Endothelial cell of umbilical vein (primary cell): ENCODE measurements at regions of chr2 and their contacts with region 1.

Region 1: GRCh38 chr2:27303093-27304025 is 4.9 kb downstream of the UCN start:
- DNase-seq: peak; percentile 69
- H3K4me3 ChIP-seq: no peak overlapping the region
- H3K27ac ChIP-seq: no peak overlapping the region
- H3K4me1 ChIP-seq: peaks cover 8% of the 10 kb centered on the region
- H3K27me3 ChIP-seq: peaks cover 23 to 36% of the 10 kb centered on the region in 2 experiments
- CTCF ChIP-seq: peak; percentile 66
- POLR2A ChIP-seq: no peak

Region 2: DNA sequence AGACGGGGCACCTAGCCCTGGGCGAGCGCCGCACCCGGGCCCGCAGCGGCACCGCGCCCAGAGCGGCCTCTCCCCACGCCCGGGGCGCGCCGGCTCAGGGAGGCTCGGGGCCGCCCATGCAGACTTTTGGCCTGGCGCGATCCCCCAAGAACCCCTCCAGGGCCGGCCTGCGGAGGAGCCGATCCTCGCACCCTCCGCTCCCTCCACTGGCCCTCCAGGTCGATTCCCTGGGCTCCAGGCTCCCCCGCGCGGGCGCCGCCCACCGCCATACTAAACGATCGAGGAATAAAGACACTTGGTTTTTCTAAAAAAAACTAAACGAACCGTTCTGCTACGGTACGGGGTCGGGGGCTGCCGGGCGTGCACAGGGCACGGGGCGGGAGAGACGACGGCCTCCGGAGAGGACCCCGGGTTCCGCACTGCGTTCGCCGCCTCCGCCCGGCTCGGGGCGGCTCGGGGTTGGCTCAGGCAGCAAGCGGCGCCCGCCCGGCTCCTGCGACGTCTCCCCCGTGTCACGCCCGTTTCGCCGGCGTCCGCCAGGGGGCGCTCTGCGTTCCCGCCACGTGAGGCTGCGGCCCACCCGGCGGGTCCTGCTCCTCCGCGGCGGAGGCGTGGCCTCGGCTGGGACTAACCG is 217.2 kb before region 1 on chr2:
- CTCF ChIA-PET with region 1: interaction called, 6 read pairs
- POLR2A ChIA-PET with region 1: no interaction called
- dilution Hi-C with region 1: no loop called
- intact Hi-C with region 1: loop called (anchors 1 kb)
- DNase-seq: peak; percentile 94
- H3K4me3 ChIP-seq: peak overlapping the region; percentile 55 to 73 (median 64)
- H3K27ac ChIP-seq: peak overlapping the region; percentile 51
- H3K4me1 ChIP-seq: peaks cover 12% of the 10 kb centered on the region
- H3K27me3 ChIP-seq: no peaks in the 10 kb centered on the region
- CTCF ChIP-seq: peak; percentile 76 to 86
- POLR2A ChIP-seq: peak; percentile 62

Region 3: GRCh38 chr2:27133905-27134780 is 169.2 kb before region 1 on chr2 and contains the start of gene PREB:
- CTCF ChIA-PET with region 1: interaction called, 12 read pairs
- POLR2A ChIA-PET with region 1: no interaction called
- dilution Hi-C with region 1: no loop called
- intact Hi-C with region 1: no loop called
- DNase-seq: peak; percentile 97
- H3K4me3 ChIP-seq: peak within 1 kb of the TSS; percentile 78 to 97 (median 84)
- H3K27ac ChIP-seq: peak within 1 kb of the TSS; percentile 72
- H3K4me1 ChIP-seq: peaks cover 10% of the 10 kb centered on the region
- H3K27me3 ChIP-seq: no peaks in the 10 kb centered on the region
- CTCF ChIP-seq: peak; percentile 13 to 48
- POLR2A ChIP-seq: peak; percentile 90
- total RNA-seq, gene PREB: 45.6 and 47.2 TPM in 2 replicates

Region 4: DNA sequence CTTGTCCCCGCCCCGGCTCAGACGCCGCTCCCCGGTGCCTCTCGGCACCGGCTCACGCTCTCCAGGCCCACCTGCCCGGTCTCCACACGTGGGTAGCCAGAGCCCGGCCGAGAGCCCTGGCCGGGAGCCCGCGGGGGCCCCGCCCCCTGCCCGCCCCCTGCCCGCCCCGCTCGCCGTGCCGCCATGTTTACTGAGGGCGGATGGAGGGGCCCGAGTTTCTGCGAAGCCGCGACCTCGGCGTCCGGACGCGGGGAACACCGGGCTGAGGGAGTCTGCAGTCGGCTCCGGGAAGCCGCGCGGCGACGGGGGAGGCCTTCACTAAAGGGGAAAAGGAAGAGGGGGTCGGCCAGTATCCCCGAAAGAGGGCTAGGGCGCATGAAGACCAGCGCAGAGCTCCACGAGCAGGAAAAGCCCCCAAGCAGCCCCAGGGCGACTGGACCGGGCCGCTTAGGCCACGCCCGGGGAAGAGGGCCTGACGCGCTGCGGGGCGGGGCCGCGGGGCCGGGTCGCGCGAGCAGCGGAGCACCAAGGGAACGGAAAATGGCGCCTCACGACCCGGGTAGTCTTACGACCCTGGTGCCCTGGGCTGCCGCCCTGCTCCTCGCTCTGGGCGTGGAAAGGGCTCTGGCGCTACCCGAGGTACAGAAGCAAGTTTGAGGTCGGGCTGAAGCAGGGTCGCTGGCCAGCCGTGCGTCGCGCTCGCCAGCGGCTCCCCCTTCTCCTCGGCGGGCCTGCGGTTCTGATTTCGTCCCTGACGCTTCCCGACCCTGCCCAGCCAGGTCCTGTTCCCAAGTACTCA is 91.3 kb before region 1 on chr2 and contains the starts of genes ATRAID and SLC5A6:
- CTCF ChIA-PET with region 1: interaction called, 5 read pairs
- POLR2A ChIA-PET with region 1: interaction called, 3 read pairs
- dilution Hi-C with region 1: no loop called
- intact Hi-C with region 1: loop called (anchors 1 kb)
- DNase-seq: peak; percentile 92
- H3K4me3 ChIP-seq: peak within 1 kb of the TSS; percentile 68 to 91 (median 88)
- H3K27ac ChIP-seq: peak within 1 kb of the TSS; percentile 89
- H3K4me1 ChIP-seq: peaks cover 17% of the 10 kb centered on the region
- H3K27me3 ChIP-seq: no peaks in the 10 kb centered on the region
- CTCF ChIP-seq: no peak
- POLR2A ChIP-seq: peak; percentile 98
- total RNA-seq, gene ATRAID: 84.3 and 86.6 TPM in 2 replicates
- total RNA-seq, gene SLC5A6: 42.7 and 52.0 TPM in 2 replicates

Region 5: DNA sequence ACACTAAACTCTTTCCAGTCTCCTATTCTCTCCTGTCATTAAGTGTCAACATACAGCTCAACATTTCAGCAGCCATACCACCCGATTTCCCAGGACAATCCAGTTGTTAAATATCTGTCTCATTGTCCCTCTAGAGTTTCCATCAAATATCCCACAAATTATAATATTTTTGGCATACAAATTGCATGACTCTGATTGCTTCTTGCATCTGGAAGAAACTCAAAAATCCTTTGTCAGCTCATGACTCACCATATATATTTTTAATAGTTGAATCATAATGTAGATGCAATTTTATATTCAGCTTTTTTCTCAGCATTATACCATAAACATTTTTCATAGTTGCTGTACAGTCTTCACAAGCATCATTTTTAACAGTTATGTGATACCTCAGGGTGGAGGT is 47.7 kb before region 1 on chr2:
- CTCF ChIA-PET with region 1: interaction called, 23 read pairs
- POLR2A ChIA-PET with region 1: no interaction called
- dilution Hi-C with region 1: no loop called
- intact Hi-C with region 1: loop called (anchors 1 kb)
- DNase-seq: peak; percentile 49
- H3K4me3 ChIP-seq: no peak overlapping the region
- H3K27ac ChIP-seq: no peak overlapping the region
- H3K4me1 ChIP-seq: peaks cover 11% of the 10 kb centered on the region
- H3K27me3 ChIP-seq: peaks cover 0 to 4% of the 10 kb centered on the region in 2 experiments
- CTCF ChIP-seq: no peak
- POLR2A ChIP-seq: no peak

Region 6: DNA sequence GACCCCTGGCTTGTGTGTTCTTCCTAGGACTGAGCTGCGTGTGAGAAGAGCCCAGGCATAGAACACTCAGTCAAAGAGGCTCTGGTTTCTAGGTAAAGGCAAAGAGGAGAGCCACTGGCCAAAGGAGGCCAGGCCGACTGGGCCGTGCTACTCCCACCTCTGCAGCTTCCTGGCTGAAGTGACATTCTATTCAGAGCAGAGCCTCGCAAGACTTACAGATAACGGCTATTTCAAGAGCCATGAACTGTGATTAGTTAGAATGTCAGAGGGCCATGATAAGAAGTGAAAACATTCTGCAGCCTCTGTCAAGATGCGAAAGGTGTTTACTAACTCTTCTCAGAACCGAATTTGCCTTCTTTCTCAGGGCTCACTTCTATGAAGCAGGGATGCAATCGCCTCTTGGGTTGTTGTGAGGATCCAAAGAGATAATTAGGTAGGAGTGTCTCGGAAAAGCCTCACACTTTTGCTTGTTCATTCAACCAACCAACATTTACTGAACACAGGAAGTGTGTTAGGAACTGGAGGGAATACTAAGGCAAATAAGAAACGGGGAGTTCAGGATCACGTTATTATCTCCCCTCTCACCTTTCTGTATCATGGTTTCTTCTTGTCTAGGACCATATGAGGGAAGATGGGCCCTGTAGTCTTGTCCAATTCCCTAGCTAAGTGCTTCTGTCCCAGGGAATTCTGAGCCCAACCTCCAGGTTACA is 31.6 kb before region 1 on chr2:
- CTCF ChIA-PET with region 1: interaction called, 61 read pairs
- POLR2A ChIA-PET with region 1: no interaction called
- dilution Hi-C with region 1: no loop called
- intact Hi-C with region 1: no loop called
- DNase-seq: no peak
- H3K4me3 ChIP-seq: no peak overlapping the region
- H3K27ac ChIP-seq: no peak overlapping the region
- H3K4me1 ChIP-seq: no peaks in the 10 kb centered on the region
- H3K27me3 ChIP-seq: peaks cover 8% of the 10 kb centered on the region in 2 experiments
- CTCF ChIP-seq: no peak
- POLR2A ChIP-seq: no peak

Region 7: GRCh38 chr2:27314709-27315108 is 11.3 kb after region 1 on chr2:
- CTCF ChIA-PET with region 1: interaction called, 12 read pairs
- POLR2A ChIA-PET with region 1: no interaction called
- dilution Hi-C with region 1: no loop called
- intact Hi-C with region 1: no loop called
- DNase-seq: no peak
- H3K4me3 ChIP-seq: no peak overlapping the region
- H3K27ac ChIP-seq: no peak overlapping the region
- H3K4me1 ChIP-seq: peaks cover 6% of the 10 kb centered on the region
- H3K27me3 ChIP-seq: no peaks in the 10 kb centered on the region
- CTCF ChIP-seq: no peak
- POLR2A ChIP-seq: no peak